ENCODE measurements at regions of chr16 and their contacts with region 1.

Region 1: GRCh38 chr16:30698139-30698815 is 694 bp upstream of the SRCAP start:
- DNase-seq: peak; percentile 98 to 100 (median 99)
- ATAC-seq: peak; percentile 86
- H3K4me3 ChIP-seq: peak overlapping the region; percentile 86
- H3K4me3 Mint-ChIP-seq: peak overlapping the region; percentile 87 to 99 (median 97)
- H3K27ac ChIP-seq: peak overlapping the region; percentile 99
- H3K27ac Mint-ChIP-seq: peak overlapping the region; percentile 99 to 100 (median 100)
- H3K4me1 ChIP-seq: peaks cover 15 to 35% of the 10 kb centered on the region in 2 donors
- H3K4me1 Mint-ChIP-seq: peaks cover 26 to 48% (median 41%) of the 10 kb centered on the region in 7 donors
- H3K27me3 ChIP-seq: no peaks in the 10 kb centered on the region
- H3K27me3 Mint-ChIP-seq: no peaks in the 10 kb centered on the region

Region 2: DNA sequence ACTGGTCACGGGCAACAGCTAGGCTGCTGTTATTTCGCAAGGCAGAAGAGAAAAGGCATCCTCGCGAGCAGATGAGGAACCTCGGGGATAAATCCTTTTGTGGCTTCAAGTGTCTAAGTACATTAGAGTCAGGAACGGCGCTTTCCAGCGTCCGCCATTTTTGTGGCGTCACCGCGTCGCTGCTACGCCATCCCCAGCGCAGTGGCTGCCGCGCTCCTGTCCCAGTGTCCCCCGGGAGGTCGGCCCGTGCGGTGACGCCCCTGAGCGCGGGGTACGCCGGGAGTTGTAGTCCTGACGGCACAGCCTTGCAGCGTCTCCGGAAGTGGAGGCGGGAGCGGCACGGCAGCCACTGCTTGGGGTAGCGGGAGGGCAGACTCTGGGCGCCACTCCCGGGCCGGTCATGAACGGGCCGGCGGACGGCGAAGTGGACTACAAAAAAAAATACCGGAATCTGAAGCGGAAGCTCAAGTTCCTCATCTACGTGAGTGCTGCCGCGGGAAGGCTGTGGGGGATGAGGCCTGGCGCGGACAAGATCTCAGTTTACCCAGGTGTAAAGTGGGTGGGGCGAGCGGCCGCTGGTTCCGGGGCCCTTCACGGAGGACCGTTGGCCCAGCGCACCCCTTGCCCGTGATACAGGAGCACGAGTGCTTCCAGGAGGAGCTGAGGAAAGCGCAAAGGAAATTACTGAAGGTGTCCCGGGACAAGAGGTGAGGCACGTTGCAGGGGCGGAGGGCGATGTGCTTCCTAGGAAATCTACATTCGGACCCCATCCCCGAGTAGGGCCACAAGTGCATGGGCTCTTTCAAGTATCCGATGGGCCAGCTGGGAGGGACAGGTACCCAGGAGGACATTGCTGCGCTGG is 702.1 kb before region 1 on chr16 and contains the start of gene INO80E:
- CTCF ChIA-PET with region 1: no interaction called
- POLR2A ChIA-PET with region 1: no interaction called
- intact Hi-C with region 1: loop called in 1 of 2 experiments (anchors 1 kb)
- DNase-seq: peak; percentile 94 to 99 (median 98)
- ATAC-seq: peak; percentile 99
- H3K4me3 ChIP-seq: peak within 1 kb of the TSS; percentile 100
- H3K4me3 Mint-ChIP-seq: peak within 1 kb of the TSS; percentile 86 to 99 (median 98)
- H3K27ac ChIP-seq: peak within 1 kb of the TSS; percentile 99
- H3K27ac Mint-ChIP-seq: peak within 1 kb of the TSS; percentile 93 to 99 (median 97)
- H3K4me1 ChIP-seq: peaks cover 16 to 18% of the 10 kb centered on the region in 2 donors
- H3K4me1 Mint-ChIP-seq: peaks cover 24 to 53% (median 38%) of the 10 kb centered on the region in 7 donors
- H3K27me3 ChIP-seq: no peaks in the 10 kb centered on the region
- H3K27me3 Mint-ChIP-seq: no peaks in the 10 kb centered on the region
- total RNA-seq, gene INO80E: 71.7 to 141 (median 95.8) TPM

Region 3: DNA sequence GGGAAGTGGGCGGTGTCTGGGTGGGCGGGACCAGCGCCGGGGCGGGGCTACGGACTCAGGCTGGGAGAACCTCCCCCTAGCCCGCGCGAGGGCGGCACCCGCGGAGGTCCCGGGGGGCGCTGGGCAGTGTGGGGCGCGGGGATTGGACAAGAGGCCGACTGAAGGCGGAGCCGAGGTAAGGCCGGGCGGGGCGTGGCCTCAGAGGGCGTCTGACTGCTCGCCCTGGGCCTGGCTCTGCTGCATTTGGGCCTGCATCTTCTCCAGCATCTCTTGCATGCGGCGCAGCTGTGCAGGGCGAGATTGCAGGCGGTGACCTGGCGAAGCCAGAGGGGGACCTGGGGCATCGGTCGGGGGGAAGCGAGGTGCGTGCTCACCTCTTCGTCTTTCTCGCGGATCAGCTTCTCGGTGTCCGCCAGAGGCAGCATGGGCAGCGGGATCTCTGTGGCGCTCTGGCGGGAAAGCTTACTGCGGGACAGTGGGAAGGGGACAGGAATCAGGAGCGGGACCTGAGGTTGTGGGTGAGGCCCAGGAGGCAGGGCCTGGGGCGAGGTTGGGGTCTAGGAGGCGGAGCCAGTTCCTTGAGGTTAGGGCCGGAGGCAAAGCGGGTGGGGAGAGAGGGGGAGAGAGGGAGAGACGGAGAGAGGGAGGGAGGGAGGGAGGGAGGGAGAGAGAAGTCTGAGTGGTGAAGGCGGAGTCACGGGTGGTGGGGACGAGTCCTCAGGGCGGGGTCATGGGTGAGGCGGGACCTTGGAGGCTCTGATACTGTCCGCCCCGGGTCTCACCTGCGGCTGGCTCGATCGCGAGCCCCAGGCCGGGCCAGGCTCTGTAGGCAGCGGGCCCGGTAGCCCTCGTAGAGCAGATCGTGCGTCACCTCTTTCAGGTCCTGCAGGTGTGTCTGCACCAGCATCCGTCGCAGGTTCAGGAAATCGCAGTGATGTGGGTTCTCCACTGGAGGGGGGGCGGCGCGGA is 319.8 kb before region 1 on chr16:
- CTCF ChIA-PET with region 1: no interaction called
- POLR2A ChIA-PET with region 1: no interaction called
- intact Hi-C with region 1: loop called in 1 of 2 experiments (anchors 2 kb)
- DNase-seq: peak; percentile 97 to 99 (median 99)
- ATAC-seq: peak; percentile 91
- H3K4me3 ChIP-seq: peak overlapping the region; percentile 88
- H3K4me3 Mint-ChIP-seq: peak overlapping the region; percentile 90 to 100 (median 97)
- H3K27ac ChIP-seq: peak overlapping the region; percentile 100
- H3K27ac Mint-ChIP-seq: peak overlapping the region; percentile 98 to 100 (median 100)
- H3K4me1 ChIP-seq: peaks cover 54 to 56% of the 10 kb centered on the region in 2 donors
- H3K4me1 Mint-ChIP-seq: peaks cover 32 to 61% (median 49%) of the 10 kb centered on the region in 7 donors
- H3K27me3 ChIP-seq: no peaks in the 10 kb centered on the region
- H3K27me3 Mint-ChIP-seq: no peaks in the 10 kb centered on the region

Region 4: GRCh38 chr16:30534368-30535105 is 163.7 kb before region 1 on chr16 and contains the start of gene ZNF747:
- CTCF ChIA-PET with region 1: interaction called, 3 read pairs
- POLR2A ChIA-PET with region 1: no interaction called
- intact Hi-C with region 1: loop called in 1 of 2 experiments (anchors 1 kb)
- DNase-seq: peak; percentile 84 to 92 (median 89)
- ATAC-seq: peak; percentile 87
- H3K4me3 ChIP-seq: peak within 1 kb of the TSS; percentile 60
- H3K4me3 Mint-ChIP-seq: peak within 1 kb of the TSS; percentile 91 to 100 (median 96)
- H3K27ac ChIP-seq: peak within 1 kb of the TSS; percentile 98
- H3K27ac Mint-ChIP-seq: peak within 1 kb of the TSS; percentile 94 to 99 (median 98)
- H3K4me1 ChIP-seq: peaks cover 8 to 13% of the 10 kb centered on the region in 2 donors
- H3K4me1 Mint-ChIP-seq: peaks cover 14 to 53% (median 43%) of the 10 kb centered on the region in 7 donors
- H3K27me3 ChIP-seq: no peaks in the 10 kb centered on the region
- H3K27me3 Mint-ChIP-seq: no peaks in the 10 kb centered on the region
- total RNA-seq, gene ZNF747: 9.1 to 17.4 (median 13.8) TPM

Region 5: GRCh38 chr16:30609926-30610839 is 88.1 kb before region 1 on chr16 and contains the start of gene ZNF689:
- CTCF ChIA-PET with region 1: interaction called, 3 read pairs
- POLR2A ChIA-PET with region 1: interaction called, 4 read pairs
- intact Hi-C with region 1: loop called in 1 of 2 experiments (anchors 1 kb)
- DNase-seq: peak; percentile 90 to 98 (median 93)
- ATAC-seq: peak; percentile 96
- H3K4me3 ChIP-seq: peak within 1 kb of the TSS; percentile 98
- H3K4me3 Mint-ChIP-seq: peak within 1 kb of the TSS; percentile 89 to 97 (median 94)
- H3K27ac ChIP-seq: peak within 1 kb of the TSS; percentile 94
- H3K27ac Mint-ChIP-seq: peak within 1 kb of the TSS; percentile 94 to 99 (median 97)
- H3K4me1 ChIP-seq: peaks cover 8 to 11% of the 10 kb centered on the region in 2 donors
- H3K4me1 Mint-ChIP-seq: peaks cover 5 to 26% (median 22%) of the 10 kb centered on the region in 7 donors
- H3K27me3 ChIP-seq: no peaks in the 10 kb centered on the region
- H3K27me3 Mint-ChIP-seq: no peaks in the 10 kb centered on the region
- total RNA-seq, gene ZNF689: 6.8 to 14.6 (median 12.4) TPM

Region 6: GRCh38 chr16:30747799-30748634 is 49.7 kb after region 1 on chr16 and contains the start of gene PHKG2:
- CTCF ChIA-PET with region 1: no interaction called
- POLR2A ChIA-PET with region 1: interaction called, 4 read pairs
- intact Hi-C with region 1: loop called (anchors 1 kb)
- DNase-seq: peak; percentile 82 to 95 (median 92)
- ATAC-seq: peak; percentile 99
- H3K4me3 ChIP-seq: peak within 1 kb of the TSS; percentile 51
- H3K4me3 Mint-ChIP-seq: peak within 1 kb of the TSS; percentile 78 to 98 (median 90)
- H3K27ac ChIP-seq: peak within 1 kb of the TSS; percentile 75
- H3K27ac Mint-ChIP-seq: peak within 1 kb of the TSS; percentile 82 to 95 (median 90)
- H3K4me1 ChIP-seq: peaks cover 4 to 6% of the 10 kb centered on the region in 2 donors
- H3K4me1 Mint-ChIP-seq: peaks cover 18 to 29% (median 27%) of the 10 kb centered on the region in 7 donors
- H3K27me3 ChIP-seq: no peaks in the 10 kb centered on the region
- H3K27me3 Mint-ChIP-seq: no peaks in the 10 kb centered on the region
- total RNA-seq, gene PHKG2: 33.2 to 57.8 (median 46.7) TPM

Region 7: DNA sequence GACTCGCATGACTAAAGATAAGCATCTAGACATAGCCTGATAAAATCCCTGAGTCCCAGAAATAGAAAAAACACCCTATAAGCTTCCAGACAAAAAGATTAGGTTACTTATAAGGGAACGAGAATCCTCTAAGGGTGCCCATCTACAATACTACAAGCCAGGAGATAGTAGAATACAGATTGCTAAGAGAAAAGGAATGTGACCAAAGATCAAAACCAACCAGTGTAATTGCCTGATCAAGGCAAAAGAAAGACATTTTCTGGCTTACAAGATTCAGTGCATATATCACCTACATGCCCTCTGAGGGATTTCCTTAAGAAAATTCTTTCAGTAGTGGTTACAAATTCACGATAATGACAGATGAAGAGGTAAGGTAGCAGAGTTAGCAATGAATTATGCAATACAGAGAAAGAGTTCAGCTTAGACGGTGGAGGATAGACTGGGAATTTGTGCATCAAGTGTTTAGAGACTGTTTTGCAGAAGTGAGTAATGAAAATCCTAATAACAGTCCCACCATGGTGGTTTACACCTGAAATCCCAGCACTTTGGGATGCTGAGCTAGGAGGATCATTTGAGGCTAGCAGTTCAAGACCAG is 160.6 kb after region 1 on chr16:
- CTCF ChIA-PET with region 1: no interaction called
- POLR2A ChIA-PET with region 1: no interaction called
- intact Hi-C with region 1: no loop called
- DNase-seq: no peak
- ATAC-seq: no peak
- H3K4me3 ChIP-seq: no peak overlapping the region
- H3K4me3 Mint-ChIP-seq: no peak overlapping the region
- H3K27ac ChIP-seq: no peak overlapping the region
- H3K27ac Mint-ChIP-seq: no peak overlapping the region
- H3K4me1 ChIP-seq: no peaks in the 10 kb centered on the region
- H3K4me1 Mint-ChIP-seq: peaks cover 0 to 3% (median 0%) of the 10 kb centered on the region in 7 donors
- H3K27me3 ChIP-seq: no peaks in the 10 kb centered on the region
- H3K27me3 Mint-ChIP-seq: no peaks in the 10 kb centered on the region

Region 8: DNA sequence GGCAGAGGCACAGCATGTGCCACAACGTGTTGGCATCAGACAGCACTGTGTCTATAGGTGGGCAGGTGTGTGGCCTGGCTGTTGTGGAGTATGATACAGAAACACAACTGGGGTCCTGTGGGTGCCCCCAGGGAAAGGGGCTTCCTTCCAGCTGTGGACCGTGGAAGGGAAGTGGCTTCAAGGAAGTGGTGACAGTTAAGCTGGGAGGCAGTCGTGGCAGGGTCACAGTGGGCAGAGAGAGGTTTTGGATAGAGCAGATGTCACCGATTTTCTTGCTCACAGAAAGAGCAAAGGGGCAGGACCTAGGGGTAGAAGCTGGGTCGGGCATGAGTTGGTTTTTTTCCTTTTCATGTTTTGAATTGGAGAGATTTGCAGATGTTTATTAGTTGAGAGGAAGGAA is 239.4 kb after region 1 on chr16:
- CTCF ChIA-PET with region 1: no interaction called
- POLR2A ChIA-PET with region 1: no interaction called
- intact Hi-C with region 1: no loop called
- DNase-seq: no peak
- ATAC-seq: no peak
- H3K4me3 ChIP-seq: no peak overlapping the region
- H3K4me3 Mint-ChIP-seq: no peak overlapping the region
- H3K27ac ChIP-seq: no peak overlapping the region
- H3K27ac Mint-ChIP-seq: peak overlapping the region in 5 of 9 donors; percentile 11 to 84 (median 68)
- H3K4me1 ChIP-seq: peaks cover 5 to 8% of the 10 kb centered on the region in 2 donors
- H3K4me1 Mint-ChIP-seq: peaks cover 15 to 39% (median 19%) of the 10 kb centered on the region in 7 donors
- H3K27me3 ChIP-seq: no peaks in the 10 kb centered on the region
- H3K27me3 Mint-ChIP-seq: no peaks in the 10 kb centered on the region

Region 9: GRCh38 chr16:30948667-30949649 is 250.7 kb after region 1 on chr16 and contains the start of gene ORAI3:
- CTCF ChIA-PET with region 1: no interaction called
- POLR2A ChIA-PET with region 1: no interaction called
- intact Hi-C with region 1: no loop called
- DNase-seq: peak in 4 of 9 donors; percentile 20 to 62 (median 28)
- ATAC-seq: peak; percentile 77
- H3K4me3 ChIP-seq: peak within 1 kb of the TSS; percentile 74
- H3K4me3 Mint-ChIP-seq: peak within 1 kb of the TSS; percentile 87 to 98 (median 90)
- H3K27ac ChIP-seq: peak within 1 kb of the TSS; percentile 75
- H3K27ac Mint-ChIP-seq: peak within 1 kb of the TSS; percentile 64 to 92 (median 80)
- H3K4me1 ChIP-seq: peaks cover 11 to 15% of the 10 kb centered on the region in 2 donors
- H3K4me1 Mint-ChIP-seq: peaks cover 13 to 23% (median 17%) of the 10 kb centered on the region in 7 donors
- H3K27me3 ChIP-seq: no peaks in the 10 kb centered on the region
- H3K27me3 Mint-ChIP-seq: no peaks in the 10 kb centered on the region
- total RNA-seq, gene ORAI3: 6.0 to 29.8 (median 18.4) TPM

Region 10: DNA sequence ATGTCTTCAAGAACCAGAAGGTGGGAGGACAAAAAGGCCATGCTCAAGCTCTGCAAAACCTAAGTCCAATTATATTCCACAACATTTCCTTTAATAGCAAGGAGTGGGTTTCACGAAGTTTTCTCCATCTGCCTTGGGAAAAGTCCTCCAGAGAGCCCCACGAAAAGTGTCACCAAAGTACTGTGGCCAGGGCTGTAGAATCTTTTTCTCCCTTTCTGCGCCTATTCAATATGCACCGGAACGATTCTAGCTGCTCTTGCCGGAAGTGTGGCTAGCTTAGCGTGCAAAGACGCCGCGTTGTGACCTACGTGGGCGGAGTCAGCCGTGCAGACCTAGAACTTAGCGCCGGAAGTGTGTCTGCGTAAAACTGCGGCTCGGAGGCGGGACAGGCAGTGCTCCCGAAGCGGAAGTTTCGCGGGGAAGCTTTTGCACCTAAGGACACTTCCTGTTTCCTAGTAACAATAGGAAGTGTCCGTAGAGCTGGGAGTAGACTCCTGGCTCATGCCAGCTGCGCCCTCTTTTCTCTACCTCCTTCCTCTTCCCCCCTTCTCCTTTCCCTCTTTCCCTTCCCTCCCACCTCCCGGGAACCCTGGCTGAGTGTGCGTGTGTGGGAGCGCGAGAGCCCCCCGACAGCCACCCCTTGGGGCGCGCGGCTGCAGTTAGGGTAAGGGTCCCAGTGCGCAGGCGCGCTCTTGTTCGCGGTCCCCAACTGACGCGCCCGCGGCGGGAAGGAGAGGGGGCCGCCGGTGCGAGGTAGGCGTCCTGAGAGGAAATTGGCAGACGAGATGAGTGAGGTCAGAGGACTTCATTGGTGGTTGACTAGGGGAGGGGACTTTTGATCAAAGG is 375.9 kb after region 1 on chr16 and contains the starts of genes ZNF646 and ZNF668:
- CTCF ChIA-PET with region 1: no interaction called
- POLR2A ChIA-PET with region 1: no interaction called
- intact Hi-C with region 1: loop called in 1 of 2 experiments (anchors 1 kb)
- DNase-seq: peak; percentile 84 to 99 (median 96)
- ATAC-seq: peak; percentile 90
- H3K4me3 ChIP-seq: peak within 1 kb of the TSS; percentile 89
- H3K4me3 Mint-ChIP-seq: peak within 1 kb of the TSS; percentile 85 to 99 (median 96)
- H3K27ac ChIP-seq: peak within 1 kb of the TSS; percentile 91
- H3K27ac Mint-ChIP-seq: peak within 1 kb of the TSS; percentile 92 to 98 (median 97)
- H3K4me1 ChIP-seq: peaks cover 9 to 18% of the 10 kb centered on the region in 2 donors
- H3K4me1 Mint-ChIP-seq: peaks cover 32 to 48% (median 36%) of the 10 kb centered on the region in 7 donors
- H3K27me3 ChIP-seq: no peaks in the 10 kb centered on the region
- H3K27me3 Mint-ChIP-seq: no peaks in the 10 kb centered on the region
- total RNA-seq, gene ZNF646: 22.2 to 49.1 (median 30.4) TPM
- total RNA-seq, gene ZNF668: 10.7 to 15.2 (median 12.6) TPM